B cell (primary cell): ENCODE measurements at regions of chr4 and their contacts with region 1.

Region 1: DNA sequence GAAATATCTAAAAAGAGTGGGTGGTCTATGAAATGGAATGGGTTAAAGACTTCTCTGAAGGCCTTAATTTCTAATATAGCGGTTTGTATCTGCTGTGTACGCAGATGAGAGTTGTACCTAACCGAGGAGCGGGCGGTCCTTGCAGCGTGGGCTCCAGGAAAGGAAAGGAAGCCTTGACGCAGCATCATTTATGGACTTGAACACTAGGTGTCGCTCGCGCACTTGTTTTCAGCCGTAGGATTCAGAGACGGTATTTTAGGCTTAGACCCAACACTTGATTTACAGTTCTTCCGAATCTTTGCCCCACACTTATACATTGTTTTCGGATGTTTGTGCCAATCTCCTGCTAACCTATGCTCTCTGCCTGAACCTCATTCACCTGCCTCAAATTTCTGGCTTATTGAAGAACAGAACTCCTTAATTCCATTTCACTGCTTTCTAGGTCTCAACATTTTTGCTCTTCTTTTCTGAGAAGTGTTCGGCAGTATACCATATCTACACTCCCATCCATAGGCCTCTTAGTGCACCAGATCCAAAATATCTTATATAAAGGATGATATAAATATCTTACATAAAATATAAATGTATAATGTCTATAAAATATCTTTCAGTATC is 48.9 kb upstream of the AADAT start:
- DNase-seq: peak; percentile 71
- ATAC-seq: peak; percentile 56
- H3K4me3 ChIP-seq: no peak overlapping the region
- H3K4me3 Mint-ChIP-seq: no peak overlapping the region
- H3K27ac ChIP-seq: no peak overlapping the region
- H3K27ac Mint-ChIP-seq: no peak overlapping the region
- H3K4me1 ChIP-seq: no peaks in the 10 kb centered on the region
- H3K4me1 Mint-ChIP-seq: no peaks in the 10 kb centered on the region
- H3K27me3 ChIP-seq: no peaks in the 10 kb centered on the region
- H3K27me3 Mint-ChIP-seq: peaks cover 4% of the 10 kb centered on the region
- CTCF ChIP-seq: peak; percentile 89

Region 2: GRCh38 chr4:172035562-172035961 is 1896.9 kb after region 1 on chr4:
- CTCF ChIA-PET with region 1: no interaction called
- POLR2A ChIA-PET with region 1: no interaction called
- intact Hi-C with region 1: loop called (anchors 2 kb)
- DNase-seq: no peak
- ATAC-seq: no peak
- H3K4me3 ChIP-seq: no peak overlapping the region
- H3K4me3 Mint-ChIP-seq: no peak overlapping the region
- H3K27ac ChIP-seq: no peak overlapping the region
- H3K27ac Mint-ChIP-seq: no peak overlapping the region
- H3K4me1 ChIP-seq: no peaks in the 10 kb centered on the region
- H3K4me1 Mint-ChIP-seq: no peaks in the 10 kb centered on the region
- H3K27me3 ChIP-seq: no peaks in the 10 kb centered on the region
- H3K27me3 Mint-ChIP-seq: no peaks in the 10 kb centered on the region
- CTCF ChIP-seq: no peak